Left cardiac atrium (tissue), 4 donors: ENCODE measurements at regions of chr11 and their contacts with region 1.

Region 1: GRCh38 chr11:120391292-120391691 is 55.1 kb downstream of the ARHGEF12 start:
- DNase-seq: no peak
- ATAC-seq: peak; percentile 53 to 55

Region 2: DNA sequence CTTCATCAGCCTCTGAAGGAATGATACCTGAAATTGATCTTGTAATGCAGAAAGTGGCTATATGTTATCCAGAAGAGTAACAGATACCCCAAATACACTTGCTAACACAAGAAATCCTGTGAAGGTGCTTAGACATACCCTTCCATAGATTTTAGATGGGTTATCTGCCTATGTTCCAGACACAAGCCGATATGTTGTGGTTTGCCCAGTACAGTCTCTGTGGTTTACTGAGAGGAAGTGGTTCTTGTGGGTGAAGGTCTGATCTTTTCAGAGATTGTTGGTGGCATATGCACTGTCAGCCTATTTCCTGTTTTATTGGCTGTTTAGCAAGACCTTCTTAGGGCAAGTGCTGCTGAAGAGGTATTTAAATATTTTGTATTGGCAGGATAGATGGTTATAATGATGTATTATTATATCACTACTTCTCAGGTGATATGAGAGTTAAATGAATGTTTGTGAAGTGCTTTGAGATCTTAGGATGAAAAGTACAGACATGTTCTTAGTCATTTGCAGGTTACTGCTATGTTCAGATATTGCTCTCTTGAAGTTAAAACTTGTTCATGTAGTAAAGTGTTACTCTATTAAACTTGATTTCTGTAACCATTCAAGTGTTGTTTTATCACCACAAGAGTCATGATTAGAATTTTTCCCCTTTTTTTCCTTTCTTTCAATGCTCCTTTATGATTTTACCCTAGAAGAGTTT is 46.8 kb before region 1 on chr11:
- intact Hi-C with region 1: loop called in 1 of 2 experiments (anchors 10 kb)
- DNase-seq: no peak
- ATAC-seq: peak in 1 of 2 donors; percentile 18